IMR-90 (cell line): ENCODE measurements at regions of chr4 and their contacts with region 1.

Region 1: GRCh38 chr4:94304365-94304971 is 38.2 kb downstream of the HPGDS start:
- DNase-seq: peak; percentile 42
- ATAC-seq: peak; percentile 63
- H3K4me3 ChIP-seq: no peak overlapping the region
- H3K27ac ChIP-seq: no peak overlapping the region
- H3K4me1 ChIP-seq: no peaks in the 10 kb centered on the region
- H3K27me3 ChIP-seq: no peaks in the 10 kb centered on the region; the same call in 1 of the 2 replicates
- CTCF ChIP-seq: peak; percentile 65
- POLR2A ChIP-seq: no peak
- RAD21 ChIP-seq: peak; percentile 69

Region 2: GRCh38 chr4:94390804-94391410 is 86.4 kb after region 1 on chr4:
- CTCF ChIA-PET with region 1: no interaction called
- POLR2A ChIA-PET with region 1: no interaction called
- dilution Hi-C with region 1: no loop called
- in situ Hi-C with region 1: loop called (anchors 5 kb)
- intact Hi-C with region 1: loop called (anchors 1 kb)
- DNase-seq: peak; percentile 4
- ATAC-seq: no peak
- H3K4me3 ChIP-seq: no peak overlapping the region
- H3K27ac ChIP-seq: no peak overlapping the region
- H3K4me1 ChIP-seq: no peaks in the 10 kb centered on the region
- H3K27me3 ChIP-seq: peaks cover 9% of the 10 kb centered on the region
- CTCF ChIP-seq: peak; percentile 58
- POLR2A ChIP-seq: no peak
- RAD21 ChIP-seq: peak; percentile 46

Region 3: GRCh38 chr4:94595879-94596483 is 291.5 kb after region 1 on chr4:
- CTCF ChIA-PET with region 1: no interaction called
- POLR2A ChIA-PET with region 1: no interaction called
- dilution Hi-C with region 1: no loop called
- in situ Hi-C with region 1: loop called (anchors 10 kb)
- intact Hi-C with region 1: loop called (anchors 1 kb)
- DNase-seq: peak; percentile 74
- ATAC-seq: peak; percentile 79; the same call in 1 of the 2 replicates
- H3K4me3 ChIP-seq: no peak overlapping the region
- H3K27ac ChIP-seq: no peak overlapping the region
- H3K4me1 ChIP-seq: no peaks in the 10 kb centered on the region
- H3K27me3 ChIP-seq: no peaks in the 10 kb centered on the region
- CTCF ChIP-seq: peak; percentile 74
- POLR2A ChIP-seq: no peak
- RAD21 ChIP-seq: peak; percentile 87

Region 4: GRCh38 chr4:95095348-95095974 is 791.0 kb after region 1 on chr4:
- CTCF ChIA-PET with region 1: no interaction called
- POLR2A ChIA-PET with region 1: no interaction called
- dilution Hi-C with region 1: no loop called
- in situ Hi-C with region 1: no loop called
- intact Hi-C with region 1: loop called (anchors 10 kb)
- DNase-seq: peak; percentile 59
- ATAC-seq: peak; percentile 82
- H3K4me3 ChIP-seq: no peak overlapping the region
- H3K27ac ChIP-seq: no peak overlapping the region
- H3K4me1 ChIP-seq: no peaks in the 10 kb centered on the region
- H3K27me3 ChIP-seq: no peaks in the 10 kb centered on the region
- CTCF ChIP-seq: peak; percentile 79
- POLR2A ChIP-seq: no peak
- RAD21 ChIP-seq: peak; percentile 84